Dendritic cell treated with granulocyte-macrophage colony-stimulating factor and Interleukin-4, amounts not matched to agents 40 ng/mL and 50 ng/mL, for 4 days (primary cell): ENCODE measurements at regions of chr3 and their contacts with region 1.

Region 1: GRCh38 chr3:138381950-138382688 is 33.7 kb downstream of the MRAS start:
- H3K4me3 Mint-ChIP-seq: no peak overlapping the region
- H3K27ac Mint-ChIP-seq: peak overlapping the region; percentile 84
- H3K4me1 Mint-ChIP-seq: peaks cover 75% of the 10 kb centered on the region
- H3K27me3 Mint-ChIP-seq: no peaks in the 10 kb centered on the region

Region 2: GRCh38 chr3:138347960-138348753 is 34.0 kb before region 1 on chr3 and contains the start of gene MRAS:
- intact Hi-C with region 1: loop called (anchors 1 kb)
- H3K4me3 Mint-ChIP-seq: peak within 1 kb of the TSS; percentile 100
- H3K27ac Mint-ChIP-seq: peak within 1 kb of the TSS; percentile 99
- H3K4me1 Mint-ChIP-seq: peaks cover 46% of the 10 kb centered on the region
- H3K27me3 Mint-ChIP-seq: peaks cover 7% of the 10 kb centered on the region

Region 3: DNA sequence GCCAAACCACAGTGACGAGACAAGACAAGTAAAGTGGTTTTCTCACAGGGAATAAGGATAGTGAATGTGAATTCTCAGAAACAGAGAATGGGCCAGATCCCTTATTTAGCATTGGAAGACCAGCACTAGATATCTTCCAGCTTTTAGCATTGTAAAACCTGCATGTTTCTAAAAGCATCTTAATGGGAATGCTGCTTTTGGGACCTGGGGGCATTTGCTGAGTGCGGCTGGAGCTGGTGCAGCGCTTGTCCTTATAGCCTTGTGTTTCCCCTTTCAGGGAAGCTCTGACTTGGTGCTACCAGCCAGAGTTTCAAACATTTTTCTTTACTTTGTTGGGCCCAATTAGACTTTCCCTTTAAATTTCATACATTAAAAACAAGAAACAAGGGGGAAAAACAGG is 1605.8 kb after region 1 on chr3:
- intact Hi-C with region 1: no loop called
- H3K4me3 Mint-ChIP-seq: no peak overlapping the region
- H3K27ac Mint-ChIP-seq: no peak overlapping the region
- H3K4me1 Mint-ChIP-seq: no peaks in the 10 kb centered on the region
- H3K27me3 Mint-ChIP-seq: peaks cover 4% of the 10 kb centered on the region